ENCODE measurements at regions of chr12 and their contacts with region 1.

Region 1: GRCh38 chr12:75480469-75480949 is at the start of gene GLIPR1:
- DNase-seq: peak; percentile 86
- ATAC-seq: peak; percentile 86
- H3K4me3 Mint-ChIP-seq: peak within 1 kb of the TSS; percentile 96
- H3K27ac Mint-ChIP-seq: peak within 1 kb of the TSS; percentile 98
- H3K4me1 Mint-ChIP-seq: peaks cover 80% of the 10 kb centered on the region
- H3K27me3 Mint-ChIP-seq: no peaks in the 10 kb centered on the region
- CTCF ChIP-seq: no peak
- total RNA-seq, gene GLIPR1: 15.9 to 18.6 TPM

Region 2: DNA sequence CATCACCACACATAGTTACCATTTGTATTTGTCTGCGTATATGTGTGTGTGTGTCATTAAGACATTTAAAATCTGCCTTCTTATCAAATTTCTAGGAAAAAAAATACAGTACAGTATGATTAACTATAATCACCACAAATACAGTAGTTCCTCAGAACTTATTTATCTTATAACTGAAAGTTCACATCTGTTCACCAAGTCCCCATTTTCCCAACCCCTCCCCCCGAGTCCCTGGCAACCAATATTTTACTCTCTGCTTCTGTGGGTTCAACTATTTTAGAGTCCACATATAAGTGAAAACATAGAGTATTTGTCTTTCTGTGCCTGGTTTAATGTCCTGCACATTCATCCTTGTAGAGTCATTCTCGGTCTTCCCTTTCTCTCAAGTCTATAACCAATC is 162.7 kb before region 1 on chr12:
- CTCF ChIA-PET with region 1: no interaction called
- POLR2A ChIA-PET with region 1: no interaction called
- intact Hi-C with region 1: no loop called
- DNase-seq: no peak
- ATAC-seq: no peak
- H3K4me3 Mint-ChIP-seq: no peak overlapping the region
- H3K27ac Mint-ChIP-seq: no peak overlapping the region
- H3K4me1 Mint-ChIP-seq: no peaks in the 10 kb centered on the region
- H3K27me3 Mint-ChIP-seq: no peaks in the 10 kb centered on the region
- CTCF ChIP-seq: no peak

Region 3: DNA sequence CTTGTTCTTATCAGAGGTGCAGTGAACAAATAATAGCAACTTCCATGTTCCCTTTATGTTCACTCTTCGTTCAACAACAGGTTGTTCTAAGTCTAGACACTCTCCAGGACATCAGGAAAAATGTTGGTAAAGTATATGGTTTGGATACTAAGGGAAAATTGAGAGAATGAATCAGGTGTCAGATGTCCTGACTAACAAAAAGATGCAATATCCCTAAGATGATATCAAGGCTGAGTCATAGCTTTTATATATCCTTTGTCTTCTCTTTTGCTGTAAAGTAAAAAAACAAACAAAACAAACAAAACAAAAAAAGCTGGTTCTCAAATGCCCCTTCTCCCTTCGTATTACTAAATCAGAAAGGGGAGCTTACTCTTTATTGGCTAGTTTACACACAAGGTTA is 135.0 kb before region 1 on chr12:
- CTCF ChIA-PET with region 1: no interaction called
- POLR2A ChIA-PET with region 1: no interaction called
- intact Hi-C with region 1: loop called (anchors 5 kb)
- DNase-seq: no peak
- ATAC-seq: no peak
- H3K4me3 Mint-ChIP-seq: no peak overlapping the region
- H3K27ac Mint-ChIP-seq: no peak overlapping the region
- H3K4me1 Mint-ChIP-seq: peaks cover 13% of the 10 kb centered on the region
- H3K27me3 Mint-ChIP-seq: no peaks in the 10 kb centered on the region
- CTCF ChIP-seq: no peak

Region 4: GRCh38 chr12:75437564-75437963 is 42.9 kb before region 1 on chr12:
- CTCF ChIA-PET with region 1: interaction called, 10 read pairs
- POLR2A ChIA-PET with region 1: no interaction called
- intact Hi-C with region 1: no loop called
- DNase-seq: no peak
- ATAC-seq: peak; percentile 74
- H3K4me3 Mint-ChIP-seq: no peak overlapping the region
- H3K27ac Mint-ChIP-seq: no peak overlapping the region
- H3K4me1 Mint-ChIP-seq: peaks cover 2% of the 10 kb centered on the region
- H3K27me3 Mint-ChIP-seq: peaks cover 5% of the 10 kb centered on the region
- CTCF ChIP-seq: no peak

Region 5: DNA sequence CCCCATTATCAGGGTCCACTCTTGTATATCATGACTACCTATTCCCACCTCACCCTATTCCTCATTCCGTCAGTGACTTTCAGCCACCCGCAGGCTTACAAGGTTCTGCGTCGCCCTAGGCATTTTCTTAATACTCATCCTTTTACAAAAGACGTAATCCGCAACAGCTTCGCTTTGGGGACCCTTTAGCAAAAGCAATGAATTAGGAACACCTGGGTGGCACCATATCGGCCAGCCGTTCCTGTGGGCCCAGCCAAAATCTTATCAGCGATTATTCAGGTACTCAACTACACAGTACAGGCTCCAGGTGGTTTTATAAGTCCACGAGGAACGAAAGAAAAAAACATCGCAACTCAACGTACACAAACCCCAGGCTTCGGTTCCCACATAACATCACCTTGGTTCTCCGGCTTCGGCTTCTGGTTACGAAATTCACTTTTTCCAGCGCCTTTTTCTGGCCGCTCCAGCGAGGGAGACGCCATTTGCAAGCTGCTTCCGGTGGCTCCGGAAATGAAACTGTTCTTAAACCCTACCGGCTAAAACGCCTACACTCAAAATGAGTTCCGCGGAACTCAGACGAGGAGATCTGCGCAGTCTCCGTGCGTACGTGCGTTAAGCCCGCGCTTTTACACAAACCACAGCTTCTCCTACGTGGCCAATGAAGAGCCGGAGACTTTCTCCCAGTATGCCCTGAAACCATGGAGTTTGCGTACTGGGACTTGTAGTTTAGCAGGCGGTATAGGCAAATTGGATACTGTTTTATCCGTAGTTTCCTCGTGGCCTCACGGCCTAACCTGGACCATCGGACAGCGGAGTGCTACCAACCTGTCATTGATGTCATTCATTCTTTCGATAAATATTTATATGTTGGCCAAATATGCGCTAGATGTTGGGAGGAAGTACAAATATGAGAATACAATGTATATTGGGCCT is 30.9 kb after region 1 on chr12 and contains the start of gene KRR1:
- CTCF ChIA-PET with region 1: interaction called, 27 read pairs
- POLR2A ChIA-PET with region 1: interaction called, 7 read pairs
- intact Hi-C with region 1: loop called (anchors 1 kb)
- DNase-seq: peak; percentile 95
- ATAC-seq: peak; percentile 97
- H3K4me3 Mint-ChIP-seq: peak within 1 kb of the TSS; percentile 99
- H3K27ac Mint-ChIP-seq: peak within 1 kb of the TSS; percentile 100
- H3K4me1 Mint-ChIP-seq: peaks cover 33% of the 10 kb centered on the region
- H3K27me3 Mint-ChIP-seq: no peaks in the 10 kb centered on the region
- CTCF ChIP-seq: no peak
- total RNA-seq, gene KRR1: 113 to 121 TPM

Region 6: GRCh38 chr12:75545636-75546035 is 65.1 kb after region 1 on chr12:
- CTCF ChIA-PET with region 1: no interaction called
- POLR2A ChIA-PET with region 1: no interaction called
- intact Hi-C with region 1: no loop called
- DNase-seq: no peak
- ATAC-seq: no peak
- H3K4me3 Mint-ChIP-seq: no peak overlapping the region
- H3K27ac Mint-ChIP-seq: no peak overlapping the region
- H3K4me1 Mint-ChIP-seq: no peaks in the 10 kb centered on the region
- H3K27me3 Mint-ChIP-seq: peaks cover 29% of the 10 kb centered on the region
- CTCF ChIP-seq: no peak

Region 7: DNA sequence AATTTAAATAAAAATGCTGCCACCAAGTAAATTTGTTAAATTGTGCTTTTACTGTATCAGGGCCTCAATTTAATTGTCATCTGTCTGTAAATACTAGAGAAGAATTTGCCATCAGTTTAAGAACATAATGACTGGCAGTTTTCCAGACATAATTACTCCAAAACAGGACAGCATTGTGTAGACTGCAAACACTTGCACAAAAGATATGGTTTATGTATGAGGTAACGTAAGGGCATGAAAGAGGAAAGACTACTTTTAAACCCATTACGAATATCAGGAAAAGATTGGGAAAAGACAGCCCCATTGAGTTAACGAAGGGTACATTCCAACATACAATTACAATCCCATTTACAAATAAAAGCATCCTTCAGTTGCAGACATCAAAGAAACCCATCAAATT is 90.7 kb after region 1 on chr12:
- CTCF ChIA-PET with region 1: no interaction called
- POLR2A ChIA-PET with region 1: no interaction called
- intact Hi-C with region 1: no loop called
- DNase-seq: no peak
- ATAC-seq: no peak
- H3K4me3 Mint-ChIP-seq: no peak overlapping the region
- H3K27ac Mint-ChIP-seq: no peak overlapping the region
- H3K4me1 Mint-ChIP-seq: no peaks in the 10 kb centered on the region
- H3K27me3 Mint-ChIP-seq: peaks cover 7% of the 10 kb centered on the region
- CTCF ChIP-seq: no peak

Region 8: DNA sequence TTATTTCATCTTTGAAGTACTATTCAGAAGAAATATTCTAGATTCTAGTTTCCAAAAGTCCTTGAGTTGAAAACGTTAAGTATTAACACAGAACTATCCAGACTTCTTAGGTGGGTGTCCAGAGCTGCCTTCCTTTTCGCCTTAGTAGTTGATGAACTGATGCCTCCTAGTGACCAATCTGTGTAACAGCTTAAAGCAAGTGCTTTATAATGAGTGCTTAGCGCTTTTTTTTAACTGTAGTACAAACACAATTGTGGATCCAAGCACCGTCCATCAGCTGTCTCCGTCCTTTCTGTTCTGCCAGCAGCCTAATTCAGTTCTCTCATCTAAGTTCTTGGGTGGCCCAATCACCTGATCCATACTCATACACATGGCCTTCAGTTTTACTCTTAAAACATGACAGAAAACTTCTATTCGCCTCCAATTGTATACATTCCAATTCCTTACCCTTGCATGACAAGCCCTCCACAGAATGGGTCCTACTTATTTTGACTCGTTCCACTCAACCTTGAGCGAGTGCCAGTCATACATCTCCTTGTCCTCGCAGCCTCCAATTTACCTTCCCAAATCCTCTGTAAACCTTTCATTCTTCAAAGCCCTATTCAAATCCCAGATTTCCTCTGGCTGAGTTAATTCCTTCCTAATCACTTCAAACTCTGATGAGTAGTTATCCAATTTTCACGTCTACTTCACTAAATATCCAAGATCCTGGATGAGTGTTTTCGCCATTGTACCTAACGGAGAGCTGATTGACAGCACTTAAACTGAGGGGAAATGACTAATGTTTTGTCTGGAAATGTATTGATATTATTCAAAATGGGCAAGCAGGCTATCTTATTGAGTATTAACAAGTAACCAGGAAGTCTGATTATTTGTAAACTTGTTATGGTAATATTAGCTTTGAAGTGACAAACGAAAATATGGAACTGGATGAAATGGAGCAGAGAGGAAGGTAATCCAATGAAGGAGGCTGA is 556.9 kb after region 1 on chr12:
- CTCF ChIA-PET with region 1: interaction called, 27 read pairs
- POLR2A ChIA-PET with region 1: no interaction called
- intact Hi-C with region 1: no loop called
- DNase-seq: peak; percentile 32
- ATAC-seq: peak; percentile 74
- H3K4me3 Mint-ChIP-seq: no peak overlapping the region
- H3K27ac Mint-ChIP-seq: no peak overlapping the region
- H3K4me1 Mint-ChIP-seq: peaks cover 37% of the 10 kb centered on the region
- H3K27me3 Mint-ChIP-seq: no peaks in the 10 kb centered on the region
- CTCF ChIP-seq: peak; percentile 77